ENCODE measurements at regions of chr9 and their contacts with region 1.

Region 1: GRCh38 chr9:99000469-99001395 is 57.0 kb downstream of the COL15A1 start:
- DNase-seq: peak; percentile 76
- H3K4me3 ChIP-seq: no peak overlapping the region
- CTCF ChIP-seq: peak; percentile 82

Region 2: DNA sequence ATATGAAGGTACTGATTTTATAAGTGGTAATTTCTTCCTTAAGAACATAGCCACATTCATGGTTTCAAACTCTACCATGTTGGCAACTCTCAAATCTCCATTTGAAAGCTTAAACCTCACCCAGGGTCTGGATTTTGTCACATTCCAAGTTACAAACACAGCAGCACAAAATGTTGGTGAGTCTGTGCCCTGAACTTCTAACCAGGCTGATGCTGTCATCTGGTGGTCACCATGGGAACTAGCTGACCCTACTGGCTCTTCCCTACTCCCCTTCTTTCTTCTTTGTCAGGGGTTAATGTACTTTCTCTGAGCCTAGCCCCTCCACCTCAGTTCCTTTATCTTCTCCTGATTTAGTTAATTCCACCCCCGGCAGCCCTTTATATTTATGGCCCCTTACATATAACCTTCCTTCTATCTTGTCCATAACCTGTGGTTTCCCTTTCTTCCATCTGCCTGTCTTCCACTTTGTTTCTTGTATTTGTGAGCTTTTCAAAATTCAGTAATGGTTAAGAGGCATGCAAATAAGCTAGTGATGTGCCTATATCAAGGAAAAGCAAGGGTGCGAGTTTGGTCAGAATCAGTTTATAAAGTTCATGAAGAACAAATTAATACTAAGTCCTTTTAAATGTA is 140.1 kb after region 1 on chr9:
- in situ Hi-C with region 1: loop called (anchors 25 kb)
- DNase-seq: peak; percentile 55
- H3K4me3 ChIP-seq: no peak overlapping the region
- CTCF ChIP-seq: peak; percentile 94

Region 3: DNA sequence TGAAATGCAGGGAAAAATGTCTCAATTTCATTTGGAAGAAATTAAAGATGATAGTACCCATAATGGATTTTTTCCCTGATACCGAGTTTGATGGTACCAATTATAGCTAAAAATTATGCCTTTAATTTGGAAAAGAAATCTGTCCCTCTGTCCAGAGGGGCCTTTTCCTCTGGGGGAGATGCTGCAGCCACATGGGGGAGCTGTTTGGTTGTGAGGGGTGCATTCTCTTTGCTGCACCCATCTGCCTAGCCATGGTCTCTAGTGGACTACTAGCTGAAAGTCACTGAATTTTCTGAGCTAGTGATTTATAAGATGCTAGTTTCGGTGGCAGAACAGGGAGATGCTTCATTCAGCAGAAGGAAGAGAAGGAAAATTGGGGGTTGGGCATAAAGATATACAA is 231.0 kb after region 1 on chr9:
- in situ Hi-C with region 1: no loop called
- DNase-seq: no peak
- H3K4me3 ChIP-seq: no peak overlapping the region
- CTCF ChIP-seq: peak; percentile 68